ENCODE measurements at regions of chr3 and their contacts with region 1.

Region 1: GRCh38 chr3:73114711-73115110 is 53.3 kb downstream of the EBLN2 start:
- DNase-seq: no peak
- ATAC-seq: no peak
- H3K4me3 ChIP-seq: no peak overlapping the region
- H3K27ac ChIP-seq: no peak overlapping the region
- H3K4me1 ChIP-seq: peaks cover 0 to 6% (median 0%) of the 10 kb centered on the region in 9 donors
- H3K27me3 ChIP-seq: no peaks in the 10 kb centered on the region
- CTCF ChIP-seq: no peak

Region 2: GRCh38 chr3:73234354-73235014 is 119.8 kb after region 1 on chr3:
- intact Hi-C with region 1: no loop called
- DNase-seq: no peak
- ATAC-seq: no peak
- H3K4me3 ChIP-seq: no peak overlapping the region
- H3K27ac ChIP-seq: no peak overlapping the region
- H3K4me1 ChIP-seq: peaks cover 0 to 4% (median 0%) of the 10 kb centered on the region in 9 donors
- H3K27me3 ChIP-seq: no peaks in the 10 kb centered on the region
- CTCF ChIP-seq: no peak

Region 3: GRCh38 chr3:73484656-73485248 is 370.0 kb after region 1 on chr3:
- intact Hi-C with region 1: loop called in 1 of 10 experiments (anchors 5 kb)
- DNase-seq: no peak
- ATAC-seq: no peak
- H3K4me3 ChIP-seq: no peak overlapping the region
- H3K27ac ChIP-seq: no peak overlapping the region
- H3K4me1 ChIP-seq: peaks cover 0 to 73% (median 54%) of the 10 kb centered on the region in 9 donors
- H3K27me3 ChIP-seq: peaks cover 0 to 5% (median 0%) of the 10 kb centered on the region in 7 donors
- CTCF ChIP-seq: no peak

Measured in heart right ventricle (tissue), 16 donors.